Prostate gland (tissue), 2 donors: ENCODE measurements at regions of chr4 and their contacts with region 1.

Region 1: GRCh38 chr4:44760142-44760898 is 34.0 kb upstream of the GNPDA2 start:
- DNase-seq: no peak
- H3K4me3 ChIP-seq: no peak overlapping the region
- H3K27ac ChIP-seq: no peak overlapping the region
- H3K4me1 ChIP-seq: no peaks in the 10 kb centered on the region
- H3K27me3 ChIP-seq: no peaks in the 10 kb centered on the region
- CTCF ChIP-seq: peak in 3 of 4 experiments; percentile 39 to 49 (median 39)
- POLR2A ChIP-seq: no peak

Region 2: DNA sequence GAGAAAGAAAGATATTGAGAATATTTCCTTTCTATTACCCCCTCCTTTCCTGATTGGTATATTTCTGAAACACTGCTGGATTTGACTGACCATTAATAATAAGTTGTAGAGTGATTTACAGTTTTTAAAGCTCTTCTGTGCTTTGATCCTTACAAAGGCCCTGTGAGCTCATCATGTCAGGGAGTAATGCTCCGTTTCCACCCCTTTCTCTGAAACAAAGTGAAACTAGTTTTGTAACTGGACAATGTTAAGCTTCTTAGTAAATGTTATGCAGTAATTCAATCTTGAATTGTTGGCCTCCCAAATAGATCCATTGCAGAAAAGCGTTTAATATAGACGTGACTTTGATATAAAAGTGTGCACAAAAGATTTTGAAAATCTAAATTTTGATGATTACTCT is 156.1 kb after region 1 on chr4:
- intact Hi-C with region 1: loop called (anchors 10 kb)
- DNase-seq: no peak
- H3K4me3 ChIP-seq: no peak overlapping the region
- H3K27ac ChIP-seq: peak overlapping the region in 1 of 2 donors; percentile 1
- H3K4me1 ChIP-seq: no peaks in the 10 kb centered on the region
- H3K27me3 ChIP-seq: no peaks in the 10 kb centered on the region
- CTCF ChIP-seq: no peak
- POLR2A ChIP-seq: no peak

Region 3: GRCh38 chr4:45442466-45442865 is 682.1 kb after region 1 on chr4:
- intact Hi-C with region 1: loop called (anchors 10 kb)
- DNase-seq: no peak
- H3K4me3 ChIP-seq: no peak overlapping the region
- H3K27ac ChIP-seq: no peak overlapping the region
- H3K4me1 ChIP-seq: no peaks in the 10 kb centered on the region
- H3K27me3 ChIP-seq: no peaks in the 10 kb centered on the region
- CTCF ChIP-seq: peak in 2 of 4 experiments; percentile 24 to 40
- POLR2A ChIP-seq: no peak

Region 4: DNA sequence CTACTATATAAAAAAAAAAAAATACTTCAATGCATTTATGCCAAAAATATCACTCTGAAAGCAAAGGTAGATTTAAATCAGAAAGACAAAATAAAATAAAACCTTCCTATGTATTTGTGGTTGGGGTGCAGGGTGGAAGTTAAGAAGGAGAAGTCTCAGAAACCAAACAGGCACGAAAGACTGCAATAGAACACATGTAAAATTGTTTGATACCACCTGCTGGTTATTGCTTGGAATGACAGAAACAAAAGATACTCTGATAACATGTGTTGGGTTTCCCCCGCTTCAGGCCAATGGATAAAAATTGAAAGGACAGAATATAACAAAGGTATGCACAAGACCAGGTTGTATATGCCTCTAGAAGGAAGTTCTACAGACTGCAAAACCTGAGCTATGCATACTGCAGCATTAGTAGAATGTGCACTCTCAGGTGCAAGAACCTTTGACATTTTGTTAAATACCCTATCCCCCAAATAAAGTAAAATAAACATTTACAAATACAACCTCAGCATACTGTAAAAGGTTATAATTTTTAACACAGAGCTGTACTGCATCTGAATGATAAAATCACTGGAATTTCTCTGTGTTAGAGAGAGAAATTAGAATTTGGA is 1510.8 kb after region 1 on chr4:
- intact Hi-C with region 1: loop called (anchors 5 kb)
- DNase-seq: no peak
- H3K4me3 ChIP-seq: no peak overlapping the region
- H3K27ac ChIP-seq: no peak overlapping the region
- H3K4me1 ChIP-seq: no peaks in the 10 kb centered on the region
- H3K27me3 ChIP-seq: no peaks in the 10 kb centered on the region
- CTCF ChIP-seq: peak in 3 of 4 experiments; percentile 11 to 17 (median 16)
- POLR2A ChIP-seq: no peak